IMR-90 (cell line): ENCODE measurements at regions of chr19 and their contacts with region 1.

Region 1: DNA sequence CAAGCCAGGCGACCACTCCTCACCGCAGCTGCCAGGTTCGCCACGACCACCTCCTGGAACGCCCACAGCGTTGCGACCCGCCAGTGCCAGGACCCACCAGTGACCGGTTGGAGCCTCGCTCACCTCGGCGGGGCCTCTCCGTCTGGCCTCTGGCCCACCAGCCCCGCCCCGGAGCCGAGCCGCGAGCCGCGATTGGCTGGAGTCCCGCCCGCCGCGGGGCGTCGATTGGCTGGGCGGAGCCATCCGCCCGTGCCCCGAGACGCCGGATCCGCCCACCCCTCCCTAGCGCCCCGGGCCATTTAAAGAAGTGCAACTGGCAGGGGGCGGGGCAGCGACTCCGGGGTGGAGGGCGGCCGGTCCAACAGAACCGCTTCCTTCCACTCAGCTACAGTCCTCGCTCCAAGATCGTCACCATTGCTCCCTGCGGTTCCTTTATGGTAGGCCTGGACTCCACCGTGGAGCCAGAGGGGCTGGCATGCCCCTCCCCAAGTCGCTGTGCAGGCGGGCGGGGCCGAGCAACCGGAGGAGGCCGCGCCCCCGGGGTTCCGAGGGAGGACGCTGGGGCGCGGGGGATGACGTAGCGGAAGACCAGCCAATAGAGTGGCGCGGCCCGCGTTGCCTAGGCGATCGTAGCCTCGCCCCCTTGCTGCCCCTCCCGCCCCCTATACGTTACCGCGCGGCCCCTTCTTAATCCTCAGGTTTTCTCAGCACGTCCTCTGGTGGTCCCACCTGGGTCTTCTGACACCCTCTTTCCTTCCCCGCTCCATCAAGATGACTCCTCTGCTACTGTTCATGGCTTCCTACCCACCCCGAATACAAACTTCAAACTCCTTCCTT is at the start of gene SERTAD3:
- DNase-seq: peak; percentile 91
- ATAC-seq: peak; percentile 80
- H3K4me3 ChIP-seq: peak within 1 kb of the TSS; percentile 70
- H3K27ac ChIP-seq: peak within 1 kb of the TSS; percentile 95
- H3K4me1 ChIP-seq: peaks cover 2% of the 10 kb centered on the region
- H3K27me3 ChIP-seq: no peaks in the 10 kb centered on the region
- CTCF ChIP-seq: peak; percentile 38
- POLR2A ChIP-seq: peak; percentile 93
- RAD21 ChIP-seq: peak; percentile 32; the same call in 1 of the 2 replicates
- total RNA-seq, gene SERTAD3: 23.3 and 25.6 TPM in 2 replicates

Region 2: DNA sequence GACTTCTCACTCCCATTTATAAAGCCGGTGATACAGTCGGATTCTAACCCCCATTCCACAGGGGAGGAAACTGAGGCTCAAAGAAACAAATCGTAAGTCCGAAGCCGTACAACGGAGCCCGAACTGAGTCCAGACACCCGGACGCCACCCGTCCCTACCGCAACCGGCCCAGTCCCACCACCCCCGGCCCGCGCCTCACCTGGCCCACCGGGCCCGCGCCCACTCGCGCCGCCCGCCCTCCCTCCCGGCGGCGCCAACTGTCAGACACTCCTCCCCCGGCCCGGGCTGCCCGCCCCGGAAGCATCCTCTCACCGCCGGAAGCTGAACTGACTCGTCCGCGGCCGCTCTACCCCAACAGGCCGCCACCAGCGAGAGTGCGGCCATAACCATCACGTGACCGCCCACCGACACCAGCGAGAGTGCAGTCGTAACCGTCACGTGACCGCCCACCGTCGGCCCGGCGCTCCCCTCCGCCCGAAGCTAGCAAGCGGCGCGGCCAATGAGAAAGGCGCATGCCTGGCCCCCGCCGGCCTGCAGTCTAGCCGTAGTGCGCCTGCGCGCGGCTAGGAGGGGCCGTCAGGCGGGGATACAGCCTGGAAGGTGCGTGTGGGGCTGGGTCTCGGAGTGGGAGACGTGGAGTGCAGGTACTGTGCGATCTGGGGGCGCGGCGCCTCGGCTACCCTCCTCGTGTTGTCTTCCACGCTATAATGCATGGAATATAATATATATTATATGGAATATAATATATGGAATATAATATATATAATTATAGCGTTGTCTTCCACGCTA is 96.1 kb before region 1 on chr19 and contains the starts of genes C19orf47 and PLD3:
- CTCF ChIA-PET with region 1: no interaction called
- POLR2A ChIA-PET with region 1: no interaction called
- dilution Hi-C with region 1: no loop called
- in situ Hi-C with region 1: no loop called
- intact Hi-C with region 1: loop called (anchors 5 kb)
- DNase-seq: peak; percentile 99
- ATAC-seq: peak; percentile 97
- H3K4me3 ChIP-seq: peak within 1 kb of the TSS; percentile 70
- H3K27ac ChIP-seq: peak within 1 kb of the TSS; percentile 63
- H3K4me1 ChIP-seq: peaks cover 4% of the 10 kb centered on the region; the same call in 1 of the 2 replicates
- H3K27me3 ChIP-seq: no peaks in the 10 kb centered on the region
- CTCF ChIP-seq: no peak
- POLR2A ChIP-seq: peak; percentile 69
- RAD21 ChIP-seq: no peak
- total RNA-seq, gene C19orf47: 3.6 and 4.4 TPM in 2 replicates
- total RNA-seq, gene PLD3: 117 and 120 TPM in 2 replicates

Region 3: GRCh38 chr19:40425450-40426287 is 18.7 kb before region 1 on chr19 and contains the start of gene SERTAD1:
- CTCF ChIA-PET with region 1: interaction called, 3 read pairs
- POLR2A ChIA-PET with region 1: no interaction called
- dilution Hi-C with region 1: no loop called
- in situ Hi-C with region 1: no loop called
- intact Hi-C with region 1: loop called (anchors 1 kb)
- DNase-seq: peak; percentile 99
- ATAC-seq: peak; percentile 90
- H3K4me3 ChIP-seq: peak within 1 kb of the TSS; percentile 71
- H3K27ac ChIP-seq: peak within 1 kb of the TSS; percentile 98
- H3K4me1 ChIP-seq: peaks cover 2% of the 10 kb centered on the region; the same call in 1 of the 2 replicates
- H3K27me3 ChIP-seq: no peaks in the 10 kb centered on the region
- CTCF ChIP-seq: peak; percentile 49
- POLR2A ChIP-seq: peak; percentile 99
- RAD21 ChIP-seq: no peak
- total RNA-seq, gene SERTAD1: 25.6 and 27.4 TPM in 2 replicates

Region 4: DNA sequence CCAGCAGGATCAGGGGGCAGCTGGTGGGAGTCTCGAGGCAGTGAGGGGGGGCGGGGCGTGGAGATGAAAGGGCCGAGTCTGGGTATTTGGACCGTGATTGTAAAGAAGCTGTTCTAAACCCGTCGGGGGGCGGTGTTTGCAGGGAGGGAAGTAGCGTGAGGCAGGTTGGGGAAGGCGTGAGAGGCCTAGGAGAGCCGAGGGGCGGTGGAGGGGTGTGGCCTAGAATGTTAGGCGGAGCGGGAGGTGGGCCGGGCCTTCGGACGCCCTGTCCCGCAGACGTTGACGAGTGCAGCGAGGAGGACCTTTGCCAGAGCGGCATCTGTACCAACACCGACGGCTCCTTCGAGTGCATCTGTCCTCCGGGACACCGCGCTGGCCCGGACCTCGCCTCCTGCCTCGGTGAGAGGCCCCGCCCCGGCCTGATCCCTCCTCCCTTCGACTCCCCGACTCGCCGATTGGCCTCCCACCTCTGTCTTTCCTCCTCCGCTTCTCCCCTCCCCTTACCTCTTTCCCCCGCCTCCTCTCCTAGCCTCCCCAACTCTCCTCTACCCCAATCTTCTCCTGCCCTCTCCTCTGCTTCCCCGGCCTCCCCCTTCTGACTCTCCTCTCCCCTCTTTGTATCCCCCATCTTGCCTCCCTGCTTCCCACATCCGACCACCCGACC is 169.4 kb after region 1 on chr19:
- CTCF ChIA-PET with region 1: no interaction called
- POLR2A ChIA-PET with region 1: no interaction called
- dilution Hi-C with region 1: no loop called
- in situ Hi-C with region 1: no loop called
- intact Hi-C with region 1: loop called (anchors 1 kb)
- DNase-seq: peak; percentile 72
- ATAC-seq: peak; percentile 62
- H3K4me3 ChIP-seq: peak overlapping the region; percentile 64
- H3K27ac ChIP-seq: peak overlapping the region; percentile 96
- H3K4me1 ChIP-seq: peaks cover 12% of the 10 kb centered on the region; the same call in 1 of the 2 replicates
- H3K27me3 ChIP-seq: no peaks in the 10 kb centered on the region
- CTCF ChIP-seq: no peak
- POLR2A ChIP-seq: no peak
- RAD21 ChIP-seq: no peak